ENCODE measurements at regions of chr14 and their contacts with region 1.

Region 1: GRCh38 chr14:73472185-73473114 is 14.1 kb upstream of the NUMB start:
- DNase-seq: no peak
- H3K4me3 Mint-ChIP-seq: no peak overlapping the region
- H3K27ac Mint-ChIP-seq: no peak overlapping the region
- H3K4me1 Mint-ChIP-seq: peaks cover 12% of the 10 kb centered on the region
- H3K27me3 Mint-ChIP-seq: no peaks in the 10 kb centered on the region

Region 2: GRCh38 chr14:73173092-73173735 is 299.2 kb before region 1 on chr14:
- CTCF ChIA-PET with region 1: interaction called, 21 read pairs
- POLR2A ChIA-PET with region 1: no interaction called
- DNase-seq: no peak
- H3K4me3 Mint-ChIP-seq: no peak overlapping the region
- H3K27ac Mint-ChIP-seq: no peak overlapping the region
- H3K4me1 Mint-ChIP-seq: no peaks in the 10 kb centered on the region
- H3K27me3 Mint-ChIP-seq: no peaks in the 10 kb centered on the region

Region 3: DNA sequence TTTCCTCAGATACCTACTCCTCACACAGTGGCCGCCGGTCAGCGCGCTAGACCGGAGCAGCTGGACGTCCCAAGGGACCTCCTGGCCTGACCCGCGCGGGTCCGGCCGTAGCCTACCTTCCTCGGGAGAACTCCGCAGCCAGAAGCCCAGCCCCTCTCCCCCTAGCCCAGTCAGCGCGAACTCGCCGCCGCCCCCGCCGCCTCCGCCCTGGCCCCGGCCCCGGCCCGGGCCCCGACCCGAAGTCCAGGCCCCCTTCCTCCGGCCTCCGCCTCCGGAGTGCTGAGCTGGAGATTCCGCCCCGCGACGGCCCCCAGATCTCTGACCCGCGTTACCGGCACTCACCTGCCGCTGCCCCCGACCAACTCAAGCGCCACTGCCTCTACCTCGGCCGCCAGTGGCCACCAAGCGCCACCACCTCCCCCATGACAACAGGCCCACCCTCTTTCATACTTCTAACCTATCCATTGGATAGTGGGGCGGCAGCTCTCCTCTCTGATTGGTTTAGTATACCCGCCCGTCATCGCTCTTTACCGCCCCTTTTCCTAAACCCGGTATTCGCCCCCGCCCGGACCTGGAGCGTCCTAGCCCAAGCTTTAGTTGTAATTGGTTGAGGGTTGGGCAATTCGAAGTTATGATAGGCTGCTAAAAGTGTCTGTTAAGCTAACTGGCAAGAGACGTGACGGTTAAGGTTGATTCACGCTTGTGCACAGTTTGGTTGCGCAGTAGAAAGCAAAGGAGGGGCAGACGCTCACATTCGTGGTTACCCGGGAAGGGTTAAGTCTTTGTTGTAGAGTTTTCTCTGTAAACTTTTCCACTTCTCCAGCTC is 14.1 kb before region 1 on chr14 and contains the start of gene NUMB:
- CTCF ChIA-PET with region 1: interaction called, 33 read pairs
- POLR2A ChIA-PET with region 1: interaction called, 10 read pairs
- DNase-seq: peak; percentile 98
- H3K4me3 Mint-ChIP-seq: peak within 1 kb of the TSS; percentile 91
- H3K27ac Mint-ChIP-seq: peak within 1 kb of the TSS; percentile 81
- H3K4me1 Mint-ChIP-seq: peaks cover 43% of the 10 kb centered on the region
- H3K27me3 Mint-ChIP-seq: no peaks in the 10 kb centered on the region
- total RNA-seq, gene NUMB: 44.5 to 46.4 TPM

Region 4: GRCh38 chr14:73500360-73500759 is 27.9 kb after region 1 on chr14:
- CTCF ChIA-PET with region 1: no interaction called
- POLR2A ChIA-PET with region 1: no interaction called
- DNase-seq: no peak
- H3K4me3 Mint-ChIP-seq: no peak overlapping the region
- H3K27ac Mint-ChIP-seq: no peak overlapping the region
- H3K4me1 Mint-ChIP-seq: peaks cover 9% of the 10 kb centered on the region
- H3K27me3 Mint-ChIP-seq: no peaks in the 10 kb centered on the region

Region 5: DNA sequence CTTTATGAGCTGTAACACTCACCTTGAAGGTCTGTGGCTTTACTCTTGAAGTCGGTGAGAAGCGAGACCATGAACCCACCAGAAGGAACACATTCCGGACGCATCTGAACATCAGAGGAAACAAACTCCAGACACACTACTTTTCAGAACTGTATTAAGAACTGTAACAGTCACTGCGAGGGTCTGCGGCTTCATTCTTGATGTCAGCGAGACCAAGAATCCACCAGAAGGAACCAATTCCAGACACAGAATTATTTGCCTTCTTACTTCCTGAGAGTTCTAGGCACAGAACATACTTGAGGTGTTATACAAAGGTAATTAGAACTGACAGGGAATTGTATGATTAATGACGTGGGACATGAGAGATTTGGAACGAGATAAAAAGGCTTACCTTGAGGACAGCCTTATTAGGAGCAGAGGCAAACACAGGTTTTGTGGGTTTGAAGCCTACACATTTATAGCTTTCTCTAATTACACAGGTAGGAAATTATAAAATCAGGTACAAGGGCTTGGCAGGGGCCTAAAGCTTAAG is 95.4 kb after region 1 on chr14:
- CTCF ChIA-PET with region 1: no interaction called
- POLR2A ChIA-PET with region 1: no interaction called
- DNase-seq: no peak
- H3K4me3 Mint-ChIP-seq: peak overlapping the region; percentile 85
- H3K27ac Mint-ChIP-seq: peak overlapping the region; percentile 91
- H3K4me1 Mint-ChIP-seq: peaks cover 41% of the 10 kb centered on the region
- H3K27me3 Mint-ChIP-seq: no peaks in the 10 kb centered on the region